MCF 10A (cell line): ENCODE measurements at regions of chr4 and their contacts with region 1.

Region 1: DNA sequence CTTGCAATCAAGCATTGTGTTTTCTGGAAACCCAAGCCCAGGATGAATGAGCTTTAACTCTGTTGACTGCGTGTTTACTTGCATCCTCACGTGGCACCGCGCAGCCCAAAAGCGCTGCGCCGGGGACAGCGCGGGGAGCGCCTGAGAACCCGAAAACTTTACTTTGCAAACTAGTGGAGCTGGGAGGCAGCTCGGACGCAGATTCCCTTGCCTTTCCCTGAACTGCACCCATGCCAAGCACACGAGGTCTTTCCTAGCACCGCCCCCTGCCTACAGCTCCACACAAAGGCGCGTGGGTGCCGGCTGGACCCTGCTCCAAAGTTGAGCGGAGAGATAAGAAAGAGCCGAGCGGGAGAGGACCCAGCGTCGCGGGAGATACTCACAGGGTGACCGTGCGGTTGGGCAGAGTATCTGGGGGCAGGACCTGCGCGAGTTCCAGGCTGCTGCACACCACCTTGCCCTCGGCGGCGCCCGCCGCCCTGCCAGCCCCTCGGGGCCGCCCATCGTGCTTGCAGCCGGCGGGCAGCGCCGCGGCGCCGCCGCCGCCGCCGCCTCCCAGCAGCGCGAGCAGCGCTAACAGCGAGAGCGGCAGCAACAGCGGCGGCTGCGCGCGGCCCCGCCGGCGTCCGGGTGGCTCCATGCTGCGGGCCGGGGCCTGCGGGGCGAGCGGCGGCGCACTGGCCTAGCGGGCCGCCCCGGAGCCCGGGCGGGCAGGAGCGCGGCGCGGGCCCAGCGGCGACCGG is 550 bp downstream of the ADGRA3 start:
- DNase-seq: peak; percentile 82
- H3K4me3 Mint-ChIP-seq: peak overlapping the region; percentile 89
- H3K27ac Mint-ChIP-seq: peak overlapping the region; percentile 89
- H3K4me1 Mint-ChIP-seq: peaks cover 20% of the 10 kb centered on the region
- H3K27me3 Mint-ChIP-seq: no peaks in the 10 kb centered on the region
- CTCF ChIP-seq: no peak

Region 2: DNA sequence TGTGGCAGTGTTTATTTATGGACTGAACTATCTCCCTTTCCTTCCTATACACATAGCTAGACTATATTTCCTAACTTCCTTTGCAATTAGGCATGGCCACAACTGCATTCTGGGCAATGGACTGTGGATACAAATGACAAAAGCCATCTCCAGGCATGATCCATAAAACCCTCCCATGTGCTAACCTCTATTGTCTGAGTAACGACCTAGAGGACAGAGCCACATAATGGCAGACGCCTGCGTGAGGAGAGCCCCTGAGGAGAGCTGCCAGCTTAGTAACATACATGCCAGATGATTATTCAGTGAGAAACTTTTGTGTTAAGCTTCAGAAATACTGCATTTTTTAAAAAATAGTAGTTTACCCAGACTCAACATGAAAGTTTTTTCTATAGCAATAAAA is 142.3 kb before region 1 on chr4:
- CTCF ChIA-PET with region 1: no interaction called
- POLR2A ChIA-PET with region 1: no interaction called
- intact Hi-C with region 1: no loop called
- DNase-seq: no peak
- H3K4me3 Mint-ChIP-seq: no peak overlapping the region
- H3K27ac Mint-ChIP-seq: no peak overlapping the region
- H3K4me1 Mint-ChIP-seq: no peaks in the 10 kb centered on the region
- H3K27me3 Mint-ChIP-seq: no peaks in the 10 kb centered on the region
- CTCF ChIP-seq: no peak

Region 3: DNA sequence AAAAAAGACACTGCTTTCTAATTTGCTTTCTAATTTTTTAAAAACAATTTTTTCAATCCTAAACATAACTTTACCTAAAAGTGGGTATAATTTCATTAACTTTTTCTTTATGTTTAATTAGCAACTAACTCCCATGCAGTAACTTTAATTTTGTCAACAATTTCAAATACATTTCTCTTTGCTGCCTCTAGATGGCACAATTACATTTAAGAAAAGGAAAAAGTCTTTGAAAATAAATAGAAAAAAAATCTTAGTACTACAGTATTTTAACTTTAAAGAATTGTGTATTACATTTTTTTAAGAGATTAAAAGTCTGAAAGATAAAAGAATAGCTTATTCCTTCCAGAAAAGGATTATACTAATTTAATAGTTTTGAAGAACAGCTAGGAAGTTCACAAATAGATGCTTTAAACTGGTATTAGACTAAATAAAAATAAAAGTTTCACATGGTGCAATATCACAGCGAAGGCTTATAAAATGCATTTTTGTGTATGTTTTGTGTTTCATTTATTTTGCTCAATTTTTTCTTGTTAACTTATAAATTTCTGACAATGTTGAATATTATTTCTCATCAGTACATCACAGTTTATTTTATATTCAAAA is 104.6 kb before region 1 on chr4:
- CTCF ChIA-PET with region 1: interaction called, 3 read pairs
- POLR2A ChIA-PET with region 1: no interaction called
- intact Hi-C with region 1: loop called (anchors 5 kb)
- DNase-seq: peak; percentile 22
- H3K4me3 Mint-ChIP-seq: no peak overlapping the region
- H3K27ac Mint-ChIP-seq: no peak overlapping the region
- H3K4me1 Mint-ChIP-seq: no peaks in the 10 kb centered on the region
- H3K27me3 Mint-ChIP-seq: no peaks in the 10 kb centered on the region
- CTCF ChIP-seq: peak; percentile 41

Region 4: GRCh38 chr4:22458098-22458497 is 57.2 kb before region 1 on chr4:
- CTCF ChIA-PET with region 1: no interaction called
- POLR2A ChIA-PET with region 1: interaction called, 15 read pairs
- intact Hi-C with region 1: loop called (anchors 5 kb)
- DNase-seq: no peak
- H3K4me3 Mint-ChIP-seq: no peak overlapping the region
- H3K27ac Mint-ChIP-seq: no peak overlapping the region
- H3K4me1 Mint-ChIP-seq: peaks cover 7% of the 10 kb centered on the region
- H3K27me3 Mint-ChIP-seq: no peaks in the 10 kb centered on the region
- CTCF ChIP-seq: no peak

Region 5: DNA sequence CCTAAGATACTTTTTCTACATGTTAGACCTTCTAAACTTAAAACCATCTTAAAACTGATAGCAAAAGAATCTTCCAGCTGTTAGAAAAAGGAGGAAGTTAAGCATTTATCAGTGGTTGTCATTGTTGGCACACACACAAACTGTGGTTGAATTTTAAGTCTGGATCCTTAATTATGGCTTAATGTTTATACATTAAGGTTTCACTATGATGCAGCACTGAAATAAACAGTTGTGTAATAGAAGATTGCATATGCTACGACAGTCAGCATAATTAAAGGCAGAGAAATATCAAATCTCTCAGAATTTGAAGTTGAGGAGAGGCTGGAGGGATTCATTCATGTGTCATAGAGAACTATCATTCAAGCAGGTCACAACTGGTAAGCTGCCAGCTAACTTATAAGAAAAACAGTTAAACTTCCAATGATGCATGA is 31.8 kb before region 1 on chr4:
- CTCF ChIA-PET with region 1: interaction called, 11 read pairs
- POLR2A ChIA-PET with region 1: interaction called, 88 read pairs
- intact Hi-C with region 1: no loop called
- DNase-seq: peak; percentile 87
- H3K4me3 Mint-ChIP-seq: peak overlapping the region; percentile 36
- H3K27ac Mint-ChIP-seq: peak overlapping the region; percentile 90
- H3K4me1 Mint-ChIP-seq: peaks cover 48% of the 10 kb centered on the region
- H3K27me3 Mint-ChIP-seq: no peaks in the 10 kb centered on the region
- CTCF ChIP-seq: no peak

Region 6: DNA sequence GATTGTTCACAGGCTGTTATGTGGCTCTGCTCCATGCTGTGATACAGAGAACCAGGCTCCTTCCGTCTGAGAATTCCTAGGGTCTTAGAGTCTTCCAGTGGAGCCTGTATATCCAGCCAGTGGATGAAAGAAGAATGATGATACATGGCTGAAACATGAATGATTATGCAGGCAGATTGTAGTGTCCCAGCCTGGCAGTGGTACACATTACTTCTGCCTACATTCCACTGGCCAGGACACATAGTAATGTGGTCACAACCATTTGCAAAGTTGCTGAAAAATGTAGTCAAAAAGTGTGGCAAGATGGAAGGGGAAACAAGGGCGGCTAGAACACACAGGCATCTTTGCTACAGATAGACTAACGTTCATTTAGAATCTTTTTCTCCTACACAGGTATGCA is 172.9 kb after region 1 on chr4:
- CTCF ChIA-PET with region 1: interaction called, 3 read pairs
- POLR2A ChIA-PET with region 1: interaction called, 3 read pairs
- intact Hi-C with region 1: loop called (anchors 5 kb)
- DNase-seq: no peak
- H3K4me3 Mint-ChIP-seq: no peak overlapping the region
- H3K27ac Mint-ChIP-seq: peak overlapping the region; percentile 39
- H3K4me1 Mint-ChIP-seq: peaks cover 14% of the 10 kb centered on the region
- H3K27me3 Mint-ChIP-seq: no peaks in the 10 kb centered on the region
- CTCF ChIP-seq: no peak

Region 7: DNA sequence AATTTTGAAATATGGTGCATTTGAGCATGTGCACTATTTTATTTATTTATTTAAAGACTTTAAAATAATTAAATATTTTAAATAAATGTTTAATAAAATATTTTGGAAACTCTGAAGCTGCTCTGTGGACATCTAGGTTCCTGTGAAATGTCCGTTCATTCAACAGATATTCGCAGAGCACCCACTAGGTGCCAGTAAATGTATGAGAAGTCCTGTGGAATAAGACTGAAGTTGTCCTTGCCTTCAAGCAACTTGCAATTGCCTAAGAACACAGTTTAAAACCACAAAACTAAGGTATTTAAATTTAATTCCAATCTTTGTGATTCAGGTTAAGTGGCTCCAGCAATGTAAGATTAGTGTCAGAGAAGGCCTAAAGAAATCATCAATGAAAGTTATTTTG is 484.1 kb after region 1 on chr4:
- CTCF ChIA-PET with region 1: no interaction called
- POLR2A ChIA-PET with region 1: no interaction called
- intact Hi-C with region 1: no loop called
- DNase-seq: no peak
- H3K4me3 Mint-ChIP-seq: no peak overlapping the region
- H3K27ac Mint-ChIP-seq: no peak overlapping the region
- H3K4me1 Mint-ChIP-seq: no peaks in the 10 kb centered on the region
- H3K27me3 Mint-ChIP-seq: no peaks in the 10 kb centered on the region
- CTCF ChIP-seq: no peak